ENCODE measurements at regions of chr21 and their contacts with region 1.

Region 1: GRCh38 chr21:42593007-42593806 is 60.2 kb upstream of the PDE9A start:
- DNase-seq: peak; percentile 75 to 78
- H3K4me3 ChIP-seq: no peak overlapping the region
- H3K27ac ChIP-seq: no peak overlapping the region
- H3K4me1 ChIP-seq: peaks cover 5 to 8% of the 10 kb centered on the region in 2 donors
- H3K27me3 ChIP-seq: no peaks in the 10 kb centered on the region
- CTCF ChIP-seq: peak; percentile 28 to 84 (median 62)
- POLR2A ChIP-seq: no peak

Region 2: GRCh38 chr21:42641311-42642218 is 48.4 kb after region 1 on chr21:
- intact Hi-C with region 1: loop called (anchors 10 kb)
- DNase-seq: peak; percentile 14 to 15
- H3K4me3 ChIP-seq: no peak overlapping the region
- H3K27ac ChIP-seq: no peak overlapping the region
- H3K4me1 ChIP-seq: peaks cover 9 to 13% of the 10 kb centered on the region in 2 donors
- H3K27me3 ChIP-seq: no peaks in the 10 kb centered on the region
- CTCF ChIP-seq: no peak
- POLR2A ChIP-seq: no peak

Region 3: GRCh38 chr21:42818328-42818749 is 225.1 kb after region 1 on chr21:
- intact Hi-C with region 1: loop called (anchors 5 kb)
- DNase-seq: peak; percentile 69 to 76
- H3K4me3 ChIP-seq: no peak overlapping the region
- H3K27ac ChIP-seq: no peak overlapping the region
- H3K4me1 ChIP-seq: no peaks in the 10 kb centered on the region
- H3K27me3 ChIP-seq: no peaks in the 10 kb centered on the region
- CTCF ChIP-seq: peak; percentile 57 to 92 (median 82)
- POLR2A ChIP-seq: no peak